Activated CD4-positive, alpha-beta T cell treated with anti-CD3 and anti-CD28 coated beads for 36 hours (primary cell): ENCODE measurements at regions of chr14 and their contacts with region 1.

Region 1: DNA sequence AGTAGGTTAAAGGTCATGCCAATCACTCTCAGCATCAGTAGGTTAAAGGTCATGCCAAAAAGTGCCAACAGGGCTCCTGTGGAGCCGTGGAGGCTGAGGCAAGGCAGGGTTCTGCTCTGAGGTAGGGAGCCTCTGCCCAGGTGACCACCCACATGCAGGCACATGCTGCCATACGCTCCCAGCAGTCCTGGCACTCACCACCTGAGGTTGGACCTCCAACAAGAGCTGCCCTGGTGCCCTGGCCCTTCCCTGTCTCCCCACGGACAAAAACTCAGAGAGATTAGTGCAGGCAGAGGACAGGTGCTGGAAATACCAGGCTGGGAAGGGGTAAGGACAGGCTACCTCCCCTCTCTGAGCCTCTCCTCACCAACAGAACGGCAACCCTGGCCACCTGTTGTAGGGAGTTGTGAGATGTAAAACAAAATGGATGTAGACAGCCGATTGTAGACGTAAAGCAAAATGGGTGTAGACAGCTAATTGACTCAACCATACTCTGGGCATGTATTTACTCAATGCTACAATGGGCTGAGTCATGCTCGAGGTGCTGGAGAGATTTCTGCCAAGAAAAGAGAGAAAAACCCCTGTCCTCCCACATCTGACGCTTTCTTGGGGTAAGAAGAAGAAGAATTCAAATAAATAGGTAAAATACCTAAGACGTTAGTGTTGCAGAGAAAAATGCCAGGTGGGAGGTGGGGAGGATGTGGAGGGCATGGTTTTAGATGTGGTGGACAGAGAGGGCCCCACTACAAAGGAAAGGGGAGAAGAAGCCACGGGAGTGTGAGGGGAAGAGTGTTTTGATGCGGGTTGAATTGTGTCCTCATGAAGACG is 32.4 kb downstream of the LTBP2 start:
- DNase-seq: peak; percentile 76
- ATAC-seq: peak; percentile 83
- H3K4me3 Mint-ChIP-seq: peak overlapping the region; percentile 7
- H3K27ac Mint-ChIP-seq: peak overlapping the region; percentile 80
- H3K4me1 Mint-ChIP-seq: peaks cover 26% of the 10 kb centered on the region
- H3K27me3 Mint-ChIP-seq: no peaks in the 10 kb centered on the region

Region 2: GRCh38 chr14:74605531-74606223 is 26.0 kb after region 1 on chr14:
- CTCF ChIA-PET with region 1: interaction called, 6 read pairs
- POLR2A ChIA-PET with region 1: interaction called, 4 read pairs
- intact Hi-C with region 1: loop called in 1 of 2 experiments (anchors 2 kb)
- DNase-seq: no peak
- ATAC-seq: no peak
- H3K4me3 Mint-ChIP-seq: no peak overlapping the region
- H3K27ac Mint-ChIP-seq: no peak overlapping the region
- H3K4me1 Mint-ChIP-seq: peaks cover 8% of the 10 kb centered on the region
- H3K27me3 Mint-ChIP-seq: peaks cover 5% of the 10 kb centered on the region

Region 3: GRCh38 chr14:74618078-74618952 is 38.7 kb after region 1 on chr14:
- CTCF ChIA-PET with region 1: interaction called, 6 read pairs
- POLR2A ChIA-PET with region 1: no interaction called
- intact Hi-C with region 1: loop called in 1 of 2 experiments (anchors 1 kb)
- DNase-seq: peak; percentile 75
- ATAC-seq: peak; percentile 83
- H3K4me3 Mint-ChIP-seq: no peak overlapping the region
- H3K27ac Mint-ChIP-seq: peak overlapping the region; percentile 45
- H3K4me1 Mint-ChIP-seq: peaks cover 57% of the 10 kb centered on the region
- H3K27me3 Mint-ChIP-seq: peaks cover 7% of the 10 kb centered on the region